ENCODE measurements at regions of chr15 and their contacts with region 1.

Region 1: DNA sequence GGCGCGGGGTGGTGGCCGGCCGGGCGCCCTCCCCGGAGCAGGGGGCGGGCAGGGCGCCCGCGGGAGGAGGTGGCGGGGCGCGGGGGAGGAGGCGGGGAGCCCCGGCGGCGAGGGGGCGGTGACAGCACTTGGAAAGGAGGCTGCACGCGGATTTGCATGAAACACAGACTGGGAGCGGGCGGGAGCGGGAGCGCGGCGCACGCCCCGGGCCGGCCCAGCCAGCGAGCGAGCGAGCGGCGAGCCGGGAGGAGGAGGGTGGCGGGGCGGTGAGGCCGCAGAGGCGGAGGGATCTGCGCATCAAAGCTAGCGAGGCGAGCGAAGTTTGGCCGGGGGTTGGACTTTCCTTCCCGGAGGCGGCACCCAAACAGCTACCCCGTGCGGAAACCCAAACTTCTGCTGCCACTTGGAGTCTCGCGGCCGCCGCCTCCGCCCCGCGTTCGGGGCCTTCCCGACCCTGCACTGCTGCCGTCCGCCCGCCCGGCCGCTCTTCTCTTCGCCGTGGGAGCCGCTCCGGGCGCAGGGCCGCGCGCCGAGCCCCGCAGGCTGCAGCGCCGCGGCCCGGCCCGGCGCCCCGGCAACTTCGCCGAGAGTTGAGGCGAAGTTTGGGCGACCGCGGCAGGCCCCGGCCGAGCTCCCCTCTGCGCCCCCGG is at the start of gene SMAD3:
- DNase-seq: peak; percentile 94 to 97 (median 97)
- ATAC-seq: peak; percentile 91 to 93
- H3K4me3 ChIP-seq: peak within 1 kb of the TSS; percentile 85
- H3K27ac ChIP-seq: peak within 1 kb of the TSS; percentile 85
- H3K4me1 ChIP-seq: peaks cover 21% of the 10 kb centered on the region
- H3K27me3 ChIP-seq: no peaks in the 10 kb centered on the region
- total RNA-seq, gene SMAD3: 29.2 to 40.5 (median 30.5) TPM

Region 2: DNA sequence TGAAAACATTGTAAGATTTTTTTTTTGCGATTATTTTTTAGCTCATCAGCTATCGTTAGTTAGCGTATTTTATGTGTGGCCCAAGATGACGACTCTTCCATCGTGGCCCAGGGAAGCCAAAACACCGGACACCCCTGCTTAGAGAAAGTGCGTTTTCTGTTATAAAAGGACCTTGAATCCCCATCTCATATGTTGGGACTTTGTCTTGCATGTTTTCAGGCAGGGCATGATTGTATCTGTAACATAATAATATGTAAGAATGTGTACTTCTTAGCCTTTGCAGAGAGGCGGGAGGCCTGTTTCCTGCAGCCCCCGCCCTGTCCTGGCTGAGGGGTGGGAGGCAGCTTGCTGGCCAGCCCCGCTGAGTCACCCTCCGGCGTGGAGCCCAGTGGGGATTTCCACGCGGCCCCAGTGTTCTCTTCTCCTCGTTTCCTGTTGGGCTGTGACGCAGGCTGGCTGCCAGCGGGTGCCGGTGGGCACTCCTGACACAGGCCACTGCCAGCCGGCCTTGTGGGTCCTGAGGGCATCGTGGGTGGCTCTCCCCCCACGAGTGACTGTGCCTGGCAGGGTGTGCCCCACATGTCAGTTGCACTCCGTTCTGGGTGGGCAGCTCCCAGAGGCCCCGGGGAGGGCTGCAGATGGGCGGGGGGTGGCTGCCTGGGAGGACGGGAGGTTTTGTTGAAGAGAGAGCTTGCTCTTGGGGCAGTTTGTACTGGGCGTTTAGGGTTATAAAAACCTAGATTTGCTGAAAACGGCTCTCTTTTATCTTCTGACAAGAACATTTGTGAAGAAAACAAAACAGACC is 55.5 kb after region 1 on chr15:
- intact Hi-C with region 1: loop called in 1 of 4 experiments (anchors 10 kb)
- DNase-seq: peak; percentile 95 to 97 (median 97)
- ATAC-seq: peak; percentile 93 to 95
- H3K4me3 ChIP-seq: no peak overlapping the region
- H3K27ac ChIP-seq: peak overlapping the region; percentile 40
- H3K4me1 ChIP-seq: peaks cover 28% of the 10 kb centered on the region
- H3K27me3 ChIP-seq: no peaks in the 10 kb centered on the region

Region 3: DNA sequence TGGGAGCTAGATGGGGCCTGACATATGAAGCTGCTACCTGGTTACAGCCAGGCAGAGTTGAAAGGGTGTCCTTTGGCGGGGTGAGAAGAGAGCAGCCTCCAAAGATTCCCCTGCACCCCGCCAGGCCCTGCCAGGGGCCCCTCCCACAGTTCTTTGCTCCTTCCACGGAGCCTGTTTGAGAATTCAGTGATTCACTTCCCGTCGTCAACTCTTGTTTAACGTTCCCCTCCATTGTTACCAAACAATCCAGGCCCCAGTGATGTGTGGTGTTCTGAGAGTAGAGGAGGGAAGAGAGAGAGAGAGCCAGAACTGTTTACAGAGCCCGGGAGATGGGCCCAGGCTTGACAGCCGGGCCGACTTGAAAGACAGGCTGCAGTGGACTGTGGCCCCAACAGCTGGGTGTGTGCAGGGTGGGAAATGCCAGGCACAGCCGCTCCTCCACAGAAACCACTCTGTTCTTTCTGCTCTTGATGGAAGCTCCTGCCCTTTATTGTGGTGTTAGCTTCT is 81.4 kb after region 1 on chr15:
- intact Hi-C with region 1: loop called in 1 of 4 experiments (anchors 10 kb)
- DNase-seq: peak in 2 of 3 donors; percentile 56 to 61
- ATAC-seq: peak; percentile 51 to 78
- H3K4me3 ChIP-seq: no peak overlapping the region
- H3K27ac ChIP-seq: peak overlapping the region; percentile 94
- H3K4me1 ChIP-seq: peaks cover 35% of the 10 kb centered on the region
- H3K27me3 ChIP-seq: no peaks in the 10 kb centered on the region

Region 4: DNA sequence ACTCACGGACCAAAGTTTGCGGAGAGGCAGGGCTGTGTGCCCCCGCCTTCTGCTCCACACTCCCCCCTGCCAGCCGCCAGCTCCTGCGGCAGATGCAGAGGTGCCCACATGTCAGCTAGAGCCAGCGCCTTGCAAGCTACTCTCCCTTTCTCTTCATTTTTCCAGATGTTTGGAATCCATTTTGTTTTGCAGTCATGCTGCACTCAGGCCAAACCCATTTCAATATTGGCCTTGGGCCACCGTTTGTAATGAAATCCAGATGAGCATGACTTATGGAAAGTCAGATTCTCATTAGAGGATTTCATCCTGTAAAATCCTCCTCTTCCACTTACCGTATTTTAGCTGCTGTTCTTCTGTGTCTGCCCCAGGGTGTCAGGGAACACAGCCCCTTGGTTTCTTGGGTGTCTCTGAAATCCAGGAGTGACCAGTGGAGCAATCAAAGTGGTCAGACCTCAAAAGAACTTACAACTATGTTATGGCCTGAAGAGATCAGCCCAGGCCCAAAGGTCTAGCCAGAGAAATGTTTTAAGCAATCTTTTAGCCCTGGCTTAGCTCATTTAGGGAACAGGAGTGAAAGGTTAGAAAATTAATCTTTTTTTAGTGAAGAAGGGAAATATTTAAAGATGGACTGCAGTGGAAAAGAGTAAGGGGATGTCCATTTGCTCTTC is 123.1 kb after region 1 on chr15:
- intact Hi-C with region 1: loop called in 2 of 4 experiments (anchors 5 to 10 kb)
- DNase-seq: peak in 1 of 3 donors; percentile 66
- ATAC-seq: no peak
- H3K4me3 ChIP-seq: no peak overlapping the region
- H3K27ac ChIP-seq: peak overlapping the region; percentile 97
- H3K4me1 ChIP-seq: peaks cover 37% of the 10 kb centered on the region
- H3K27me3 ChIP-seq: no peaks in the 10 kb centered on the region

Region 5: GRCh38 chr15:67254238-67255175 is 188.9 kb after region 1 on chr15 and contains the starts of genes AAGAB and IQCH:
- intact Hi-C with region 1: loop called in 2 of 4 experiments (anchors 5 kb)
- DNase-seq: peak; percentile 98 to 99 (median 99)
- ATAC-seq: peak; percentile 100
- H3K4me3 ChIP-seq: peak within 1 kb of the TSS; percentile 57
- H3K27ac ChIP-seq: peak within 1 kb of the TSS; percentile 10
- H3K4me1 ChIP-seq: no peaks in the 10 kb centered on the region
- H3K27me3 ChIP-seq: no peaks in the 10 kb centered on the region
- total RNA-seq, gene AAGAB: 20.7 to 34.1 (median 21.3) TPM
- total RNA-seq, gene IQCH: 0.82 to 2.1 (median 1.5) TPM